Heart left ventricle (tissue), 16 donors: ENCODE measurements at regions of chr1 and their contacts with region 1.

Region 1: GRCh38 chr1:214372092-214372491 is 91.1 kb downstream of the SMYD2 start:
- DNase-seq: no peak
- ATAC-seq: peak in 3 of 4 donors; percentile 54 to 84 (median 60)
- H3K4me3 ChIP-seq: no peak overlapping the region
- H3K27ac ChIP-seq: peak overlapping the region in 7 of 12 donors; percentile 43 to 78 (median 54)
- H3K4me1 ChIP-seq: peaks cover 0 to 37% (median 15%) of the 10 kb centered on the region in 12 donors
- H3K27me3 ChIP-seq: no peaks in the 10 kb centered on the region
- CTCF ChIP-seq: no peak
- POLR2A ChIP-seq: no peak

Region 2: GRCh38 chr1:214337511-214337910 is 34.6 kb before region 1 on chr1:
- intact Hi-C with region 1: loop called in 1 of 10 experiments (anchors 5 kb)
- DNase-seq: no peak
- ATAC-seq: peak; percentile 13 to 69 (median 68)
- H3K4me3 ChIP-seq: no peak overlapping the region
- H3K27ac ChIP-seq: peak overlapping the region; percentile 3 to 84 (median 74)
- H3K4me1 ChIP-seq: peaks cover 0 to 43% (median 14%) of the 10 kb centered on the region in 12 donors
- H3K27me3 ChIP-seq: no peaks in the 10 kb centered on the region
- CTCF ChIP-seq: no peak
- POLR2A ChIP-seq: no peak